GM13976 (cell line): ENCODE measurements at regions of chr2 and their contacts with region 1.

Region 1: DNA sequence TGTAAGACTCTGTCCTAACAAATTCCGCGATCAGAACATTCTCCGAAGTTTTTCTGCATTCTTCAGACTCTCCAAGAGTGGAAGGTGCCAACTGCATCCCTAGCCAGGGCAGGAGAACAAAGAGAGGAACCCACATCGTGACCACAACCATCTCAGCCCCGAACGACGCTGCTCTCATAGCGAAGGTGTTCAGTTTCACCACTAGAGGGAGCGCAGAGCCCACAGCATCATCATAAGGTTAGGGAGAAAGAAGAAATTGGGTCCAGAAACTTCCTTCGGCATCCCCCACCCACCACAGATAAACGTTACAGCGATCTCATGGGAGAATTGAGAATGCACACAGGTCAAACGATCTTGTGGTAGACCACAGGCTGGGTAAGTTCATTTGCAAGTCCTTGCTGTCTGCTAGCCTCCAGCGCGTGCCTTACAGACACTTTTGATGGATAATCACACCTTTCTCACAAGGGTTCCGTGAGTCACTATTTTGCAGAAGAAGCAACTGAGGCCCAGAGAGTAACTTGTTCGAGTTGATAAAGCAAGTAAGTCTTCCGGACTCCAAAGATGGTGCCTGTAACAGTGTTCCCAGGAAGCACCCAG is 53.7 kb upstream of the ARL4C start:
- DNase-seq: peak; percentile 80
- CTCF ChIP-seq: peak; percentile 91

Region 2: GRCh38 chr2:233676046-233676445 is 874.6 kb before region 1 on chr2:
- in situ Hi-C with region 1: no loop called
- DNase-seq: no peak
- CTCF ChIP-seq: no peak

Region 3: DNA sequence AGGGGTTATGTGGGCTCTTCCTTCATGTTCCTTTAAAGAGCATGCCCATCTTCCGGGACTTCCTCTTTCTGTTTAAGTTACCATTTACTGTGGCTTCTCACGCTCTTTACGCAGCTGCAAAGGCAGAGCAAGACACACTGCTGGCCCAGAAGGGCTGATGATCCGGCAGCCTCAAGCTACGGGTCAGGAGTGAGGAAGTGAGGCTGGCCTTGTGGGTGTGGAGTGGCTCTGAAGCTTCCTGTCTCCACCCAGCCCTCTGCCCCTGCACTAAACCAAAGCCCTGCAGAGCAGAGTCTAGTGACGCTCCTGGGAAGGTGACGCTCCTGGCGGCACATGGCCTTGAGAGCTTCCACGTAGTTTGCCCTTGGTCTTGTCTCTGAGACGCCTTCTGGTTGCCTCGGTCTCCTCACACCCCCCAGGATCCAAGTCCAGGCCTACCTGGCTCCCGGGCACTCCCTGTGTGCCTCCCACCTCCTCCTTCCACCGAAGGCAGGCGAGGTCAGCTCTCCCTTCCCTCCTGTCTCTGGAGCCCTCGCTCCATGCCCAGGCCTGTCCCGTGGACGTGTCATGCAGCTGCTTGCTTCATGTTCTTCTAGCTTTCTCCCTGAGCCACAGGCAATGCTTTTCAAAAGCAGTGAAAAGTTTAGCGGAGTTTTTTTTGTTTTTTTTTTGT is 104.1 kb before region 1 on chr2:
- in situ Hi-C with region 1: no loop called
- DNase-seq: peak; percentile 69
- CTCF ChIP-seq: no peak

Region 4: DNA sequence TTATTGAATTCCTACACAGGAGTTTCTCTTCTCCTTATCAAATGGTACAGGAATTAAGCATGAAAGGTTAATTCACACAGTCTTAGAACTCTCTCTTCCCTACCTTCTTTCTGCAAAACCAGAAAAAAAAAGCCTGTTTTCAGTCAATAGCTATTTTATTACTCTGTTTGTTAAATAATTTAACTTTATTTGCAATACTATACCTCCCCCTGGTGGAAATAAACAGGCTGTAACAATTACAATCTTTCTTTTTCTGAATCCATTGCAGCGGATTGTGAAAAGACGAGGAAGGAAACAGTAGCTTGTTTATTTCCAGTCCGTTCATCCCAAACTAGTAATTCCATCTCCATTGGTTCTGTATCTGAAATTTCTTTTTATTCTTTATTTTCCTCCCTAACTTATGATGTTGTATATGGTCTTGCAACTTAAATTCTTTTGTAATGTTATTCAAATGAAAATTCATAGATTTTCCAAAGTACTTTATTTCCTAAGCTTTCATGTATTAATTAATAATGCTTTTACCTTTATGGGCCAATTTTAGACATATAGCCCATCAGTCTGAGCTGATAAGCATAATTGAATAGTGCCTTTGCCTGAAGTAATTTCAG is 566.4 kb after region 1 on chr2:
- in situ Hi-C with region 1: loop called (anchors 10 kb)
- DNase-seq: no peak
- CTCF ChIP-seq: peak; percentile 21